Left cardiac atrium (tissue), 4 donors: ENCODE measurements at regions of chr2 and their contacts with region 1.

Region 1: DNA sequence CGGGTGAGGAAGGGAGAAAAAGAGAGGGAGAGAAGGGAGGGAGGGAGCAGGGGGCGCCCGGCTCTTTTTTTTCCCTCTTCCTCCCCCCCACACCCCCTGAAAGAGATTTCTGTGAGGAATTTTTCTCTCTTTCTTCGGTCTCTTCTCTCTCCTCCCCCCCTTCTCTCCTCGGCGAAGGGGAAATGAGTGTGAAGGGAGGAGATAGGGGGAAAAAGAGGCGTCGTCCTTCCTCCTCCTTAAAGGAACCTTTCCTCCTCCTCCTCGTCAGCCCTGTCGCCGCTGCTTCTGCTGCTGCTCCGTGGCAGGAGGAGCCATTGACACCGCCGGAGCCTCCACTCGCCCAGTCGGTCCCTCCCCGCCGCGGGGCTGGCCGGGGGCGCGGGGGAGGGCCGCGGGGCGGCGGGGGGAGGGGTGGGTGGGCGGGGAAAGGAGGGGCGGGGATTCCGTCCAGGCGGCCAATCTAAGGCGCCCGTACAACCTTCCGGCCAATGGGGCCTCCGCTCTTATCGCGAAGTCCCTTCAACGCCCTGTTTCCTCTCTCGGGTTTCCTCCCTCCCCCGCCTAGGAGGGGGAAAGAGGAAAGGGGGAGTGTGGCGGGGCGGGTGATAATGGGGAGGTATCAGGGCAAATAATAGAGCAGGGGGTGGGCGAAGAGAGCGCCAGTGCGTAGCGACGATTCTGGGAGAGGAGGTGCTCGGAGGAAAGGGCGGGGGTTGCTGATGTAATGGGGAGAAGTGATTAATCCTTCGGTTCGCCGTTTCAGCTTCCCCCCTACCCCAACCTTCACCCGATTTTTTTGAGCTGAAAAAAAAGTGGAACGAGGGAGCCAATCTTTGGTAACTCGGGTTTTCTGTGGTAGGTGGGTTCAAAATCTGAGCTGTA is at the start of gene FBXO11:
- DNase-seq: peak; percentile 97
- ATAC-seq: peak; percentile 94 to 97
- total RNA-seq, gene FBXO11: 42.9 to 48.5 TPM

Region 2: DNA sequence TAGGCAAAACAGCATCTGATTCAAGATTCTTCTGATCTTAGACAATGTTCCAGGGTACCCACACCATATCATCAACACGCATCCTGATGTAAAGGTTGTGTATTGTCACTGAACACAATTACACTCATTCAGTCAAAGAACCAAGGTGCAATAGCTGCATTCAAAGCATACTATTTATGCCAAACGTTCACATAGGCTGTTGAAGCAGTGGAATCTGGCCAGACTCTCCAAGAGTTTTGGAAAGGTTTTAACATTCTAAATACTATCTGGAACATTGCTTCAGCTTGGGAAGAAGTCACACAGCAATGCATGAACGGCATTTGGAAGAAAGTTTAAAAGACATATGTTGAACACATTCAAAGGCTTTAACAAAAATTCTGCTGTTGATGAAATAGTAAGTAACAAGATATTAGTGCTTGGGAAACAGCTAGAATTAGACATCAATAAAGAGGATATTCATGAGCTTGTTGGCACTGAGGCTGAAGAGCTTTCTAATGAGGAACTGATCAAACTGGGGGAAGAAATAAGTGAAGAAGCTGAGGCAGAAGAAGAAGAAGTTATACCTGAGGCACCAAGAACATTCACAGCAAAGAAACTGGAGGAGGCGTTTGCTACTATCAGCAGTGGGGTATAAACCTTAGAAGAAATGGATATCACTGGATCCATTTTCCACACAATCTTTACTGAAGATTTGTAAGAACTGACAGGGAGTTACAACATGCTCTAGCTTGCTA is 171.1 kb before region 1 on chr2:
- intact Hi-C with region 1: no loop called
- DNase-seq: no peak
- ATAC-seq: no peak

Region 3: DNA sequence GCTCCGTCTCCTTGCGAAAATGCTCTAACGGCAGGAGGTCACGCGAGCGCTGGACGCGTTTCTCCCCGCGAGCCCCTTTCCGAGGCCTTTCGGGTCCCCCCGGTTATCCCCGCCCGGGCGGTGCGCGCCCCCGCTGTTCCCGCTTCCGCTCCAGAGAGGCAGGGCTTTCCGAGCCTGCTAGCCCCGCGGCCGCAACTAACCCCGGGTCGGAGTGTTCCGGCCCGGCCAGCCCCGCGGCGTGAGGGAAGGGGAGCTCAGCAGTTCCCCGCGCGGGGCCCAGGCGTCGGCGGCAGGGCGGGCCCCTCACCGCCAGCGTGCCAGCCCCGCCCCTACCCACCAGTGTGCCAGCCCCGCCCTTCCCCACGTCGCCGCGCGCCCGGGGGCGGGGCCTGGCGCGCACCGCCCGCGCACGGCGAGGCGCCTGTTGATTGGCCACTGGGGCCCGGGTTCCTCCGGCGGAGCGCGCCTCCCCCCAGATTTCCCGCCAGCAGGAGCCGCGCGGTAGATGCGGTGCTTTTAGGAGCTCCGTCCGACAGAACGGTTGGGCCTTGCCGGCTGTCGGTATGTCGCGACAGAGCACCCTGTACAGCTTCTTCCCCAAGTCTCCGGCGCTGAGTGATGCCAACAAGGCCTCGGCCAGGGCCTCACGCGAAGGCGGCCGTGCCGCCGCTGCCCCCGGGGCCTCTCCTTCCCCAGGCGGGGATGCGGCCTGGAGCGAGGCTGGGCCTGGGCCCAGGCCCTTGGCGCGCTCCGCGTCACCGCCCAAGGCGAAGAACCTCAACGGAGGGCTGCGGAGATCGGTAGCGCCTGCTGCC is 123.5 kb before region 1 on chr2 and contains the start of gene MSH6:
- intact Hi-C with region 1: loop called in 1 of 2 experiments (anchors 10 kb)
- DNase-seq: peak; percentile 90
- ATAC-seq: peak; percentile 98
- total RNA-seq, gene MSH6: 24.9 to 25.2 TPM

Region 4: GRCh38 chr2:47803363-47803762 is 103.0 kb before region 1 on chr2:
- intact Hi-C with region 1: loop called in 1 of 2 experiments (anchors 10 kb)
- DNase-seq: no peak
- ATAC-seq: no peak

Region 5: DNA sequence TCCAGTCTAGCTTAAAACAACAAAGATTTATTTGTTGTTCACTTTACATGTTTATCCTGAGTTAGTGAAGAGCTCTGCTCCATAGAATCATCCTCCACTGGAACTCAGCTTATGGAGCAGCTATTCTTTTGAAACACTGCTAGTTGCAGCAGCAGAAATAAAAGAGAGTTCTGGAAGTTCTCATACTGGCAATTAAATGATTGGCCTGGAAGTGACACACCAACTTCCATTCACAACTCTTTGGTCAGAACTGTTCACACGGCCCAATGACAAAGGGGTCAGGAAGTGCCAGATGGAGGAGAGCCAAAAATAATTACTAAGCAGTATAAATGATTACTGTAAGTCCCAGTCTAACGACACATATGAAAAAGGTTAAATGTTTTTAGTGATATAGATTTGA is 39.2 kb before region 1 on chr2:
- intact Hi-C with region 1: loop called in 1 of 2 experiments (anchors 5 kb)
- DNase-seq: no peak
- ATAC-seq: peak; percentile 88 to 89

Region 6: DNA sequence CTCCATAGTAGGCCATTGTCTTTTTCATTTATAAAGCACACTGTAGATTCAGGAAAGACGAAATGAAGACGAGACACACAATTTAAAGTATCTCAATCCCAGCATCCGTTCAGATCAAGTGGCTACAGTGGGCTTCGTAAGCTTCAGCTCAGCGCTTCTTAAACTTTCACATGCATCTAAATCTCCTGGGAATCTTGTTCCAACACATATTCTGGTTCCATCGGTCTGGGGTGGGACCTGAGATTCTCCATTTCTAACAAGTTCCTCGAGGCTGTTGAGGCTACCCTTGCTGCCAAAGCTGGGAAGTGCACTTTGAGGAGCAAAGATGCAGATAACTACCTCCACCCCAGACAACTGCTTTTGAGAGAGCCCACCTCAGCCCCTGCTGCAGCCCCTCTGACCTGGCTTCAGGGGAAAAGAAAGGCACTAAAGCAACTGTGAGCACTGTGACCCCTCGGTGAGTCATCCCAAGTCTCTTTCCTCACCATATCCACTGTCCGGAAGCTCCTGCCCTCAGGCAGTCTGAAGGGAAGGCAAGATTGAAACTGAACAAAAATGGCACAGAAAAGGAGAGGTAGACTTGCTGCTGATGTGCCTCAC is 201.0 kb after region 1 on chr2:
- intact Hi-C with region 1: loop called in 1 of 2 experiments (anchors 2 kb)
- DNase-seq: no peak
- ATAC-seq: peak in 1 of 2 donors; percentile 4

Region 7: GRCh38 chr2:48414980-48415835 is 508.8 kb after region 1 on chr2:
- intact Hi-C with region 1: loop called in 1 of 2 experiments (anchors 5 kb)
- DNase-seq: peak; percentile 33
- ATAC-seq: peak; percentile 49 to 62